ENCODE measurements at regions of chr2 and their contacts with region 1.

Region 1: DNA sequence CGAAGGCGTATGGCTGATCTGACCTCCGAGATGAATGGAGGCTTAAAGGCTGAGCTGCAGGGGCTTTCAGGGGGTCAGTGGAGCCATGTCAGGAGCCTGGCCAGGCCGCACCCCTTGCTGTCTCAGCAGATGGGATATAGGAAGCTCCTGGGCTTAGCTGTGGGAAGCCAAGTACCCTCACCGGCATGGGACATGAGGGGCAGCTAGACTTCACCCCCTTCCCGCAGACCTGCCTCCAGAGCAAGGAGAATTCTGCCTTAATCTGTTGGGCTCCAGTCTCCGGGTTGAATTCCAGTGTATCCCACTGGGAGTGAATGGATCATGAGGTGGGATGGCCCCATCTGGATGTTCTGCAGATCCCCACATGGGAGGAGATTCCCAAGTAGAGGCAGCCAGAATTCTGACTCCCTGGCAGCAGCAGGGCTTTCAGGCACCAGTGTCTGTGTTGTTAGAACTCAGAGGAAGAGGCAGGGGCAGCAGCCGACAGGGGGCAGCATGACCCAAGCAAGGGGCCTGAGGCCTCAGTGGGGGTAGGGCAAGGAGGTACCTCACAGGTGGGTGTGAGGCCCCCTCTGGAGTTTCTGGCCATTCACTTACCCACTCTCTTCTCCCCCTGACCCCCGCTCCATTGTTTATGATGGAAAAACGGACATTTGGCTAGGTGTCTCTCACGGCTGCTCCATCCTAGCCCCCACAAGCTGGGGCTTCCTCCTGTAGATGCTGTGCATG is 19.1 kb downstream of the CAPG start:
- DNase-seq: peak; percentile 79
- H3K4me3 Mint-ChIP-seq: no peak overlapping the region
- H3K27ac Mint-ChIP-seq: no peak overlapping the region
- H3K4me1 Mint-ChIP-seq: peaks cover 5% of the 10 kb centered on the region
- H3K27me3 Mint-ChIP-seq: no peaks in the 10 kb centered on the region

Region 2: GRCh38 chr2:85413592-85414421 is 22.7 kb after region 1 on chr2:
- CTCF ChIA-PET with region 1: no interaction called
- intact Hi-C with region 1: no loop called
- DNase-seq: peak; percentile 49
- H3K4me3 Mint-ChIP-seq: peak overlapping the region; percentile 66
- H3K27ac Mint-ChIP-seq: no peak overlapping the region
- H3K4me1 Mint-ChIP-seq: peaks cover 25% of the 10 kb centered on the region
- H3K27me3 Mint-ChIP-seq: peaks cover 10% of the 10 kb centered on the region

Region 3: GRCh38 chr2:85551698-85552678 is 160.9 kb after region 1 on chr2:
- CTCF ChIA-PET with region 1: interaction called, 78 read pairs
- intact Hi-C with region 1: loop called (anchors 1 kb)
- DNase-seq: peak; percentile 95
- H3K4me3 Mint-ChIP-seq: no peak overlapping the region
- H3K27ac Mint-ChIP-seq: no peak overlapping the region
- H3K4me1 Mint-ChIP-seq: peaks cover 2% of the 10 kb centered on the region
- H3K27me3 Mint-ChIP-seq: no peaks in the 10 kb centered on the region